ENCODE measurements at regions of chr19 and their contacts with region 1.

Region 1: GRCh38 chr19:2236314-2237050 is at the starts of genes PLEKHJ1 and SF3A2:
- H3K4me3 ChIP-seq: peak within 1 kb of the TSS; percentile 84
- H3K27ac ChIP-seq: peak within 1 kb of the TSS; percentile 95
- H3K4me1 ChIP-seq: peaks cover 4% of the 10 kb centered on the region; the same call in 1 of the 2 replicates
- CTCF ChIP-seq: peak; percentile 100

Region 2: GRCh38 chr19:2113439-2114211 is 122.9 kb before region 1 on chr19:
- CTCF ChIA-PET with region 1: no interaction called
- POLR2A ChIA-PET with region 1: no interaction called
- H3K4me3 ChIP-seq: no peak overlapping the region
- H3K27ac ChIP-seq: no peak overlapping the region
- H3K4me1 ChIP-seq: no peaks in the 10 kb centered on the region
- CTCF ChIP-seq: no peak

Region 3: DNA sequence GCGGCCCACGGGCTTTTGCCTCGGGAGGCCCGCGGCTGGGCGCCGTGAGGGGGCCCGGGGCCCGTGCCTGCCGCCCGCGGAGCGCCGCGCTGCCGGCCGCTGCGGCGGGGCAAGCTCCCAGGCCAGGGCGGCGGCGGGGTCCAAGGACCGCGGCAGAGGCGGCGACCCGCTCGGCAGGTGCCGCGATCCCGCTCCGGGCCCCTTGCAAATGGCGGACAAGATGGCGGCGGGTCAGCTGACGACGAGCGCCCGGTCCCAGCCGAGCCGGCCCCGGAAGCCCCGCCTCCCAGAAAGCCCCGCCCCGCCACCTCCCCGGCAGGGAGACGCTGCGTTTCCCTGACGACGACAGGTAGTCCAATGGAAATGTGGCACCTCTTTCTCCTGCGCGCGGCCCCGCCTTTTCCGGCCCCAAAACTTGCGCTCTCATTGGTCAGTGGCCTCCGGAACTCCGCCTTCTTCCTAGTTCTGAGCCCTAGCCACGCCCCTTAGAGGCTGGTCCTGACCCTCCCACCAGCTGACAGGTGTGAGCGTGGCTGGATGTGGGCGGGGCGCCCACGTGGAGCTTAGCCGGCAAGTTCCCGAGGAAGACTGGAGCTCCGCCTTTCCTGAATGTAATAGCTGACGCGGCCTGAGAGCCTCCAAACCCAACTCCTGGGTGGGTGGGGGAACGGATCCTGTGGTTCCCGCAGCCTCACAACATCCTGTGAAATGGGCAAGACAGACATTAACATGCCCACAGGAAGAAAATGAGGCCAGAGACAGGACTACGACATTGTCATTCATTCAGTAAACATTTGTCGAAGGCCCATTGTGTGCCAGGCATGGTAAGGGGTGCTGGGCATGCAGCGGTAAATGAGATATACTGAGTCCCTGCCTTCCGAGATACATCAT is 84.9 kb before region 1 on chr19 and contains the start of gene AP3D1:
- CTCF ChIA-PET with region 1: interaction called, 12 read pairs
- POLR2A ChIA-PET with region 1: interaction called, 7 read pairs
- H3K4me3 ChIP-seq: peak within 1 kb of the TSS; percentile 79
- H3K27ac ChIP-seq: peak within 1 kb of the TSS; percentile 91
- H3K4me1 ChIP-seq: peaks cover 6% of the 10 kb centered on the region
- CTCF ChIP-seq: no peak

Region 4: GRCh38 chr19:2249880-2250764 is 13.6 kb after region 1 on chr19:
- CTCF ChIA-PET with region 1: interaction called, 3 read pairs
- POLR2A ChIA-PET with region 1: interaction called, 14 read pairs
- H3K4me3 ChIP-seq: no peak overlapping the region
- H3K27ac ChIP-seq: no peak overlapping the region
- H3K4me1 ChIP-seq: no peaks in the 10 kb centered on the region
- CTCF ChIP-seq: no peak

Region 5: DNA sequence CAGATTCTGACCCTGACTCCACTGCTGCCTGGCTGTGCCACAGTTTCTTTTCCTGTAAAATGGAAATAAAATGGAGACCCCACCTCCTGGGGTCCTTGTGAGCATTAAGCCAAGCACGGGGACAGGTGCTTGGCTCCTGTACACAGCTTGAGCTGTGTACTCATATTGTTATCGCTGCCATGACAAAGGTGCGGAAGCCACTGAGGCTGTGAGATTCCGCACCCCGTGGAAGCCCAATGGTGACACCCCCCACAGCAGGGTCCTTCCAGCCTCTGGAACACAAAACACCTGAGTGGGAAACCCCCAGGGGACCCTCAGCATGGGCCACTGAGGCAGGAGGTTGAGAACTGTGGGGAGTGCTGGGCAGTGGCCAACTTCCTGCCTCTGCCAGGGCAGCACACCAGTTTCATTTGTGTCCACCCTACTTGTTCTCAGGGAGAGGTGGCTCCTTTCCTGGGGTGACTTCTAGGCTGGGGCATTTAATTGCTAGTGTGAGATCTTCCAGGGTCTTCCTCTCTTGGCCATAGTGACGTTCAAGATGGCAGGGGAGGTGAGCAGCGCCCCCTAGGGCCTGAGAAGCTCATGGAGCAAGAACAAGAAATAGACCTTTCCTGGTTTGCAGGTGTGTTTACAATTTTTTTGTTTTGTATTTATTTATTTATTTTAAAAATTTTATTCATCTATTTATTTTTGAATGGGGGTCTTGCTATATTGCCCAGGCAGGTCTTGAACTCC is 25.1 kb after region 1 on chr19:
- CTCF ChIA-PET with region 1: interaction called, 29 read pairs
- POLR2A ChIA-PET with region 1: interaction called, 8 read pairs
- H3K4me3 ChIP-seq: no peak overlapping the region
- H3K27ac ChIP-seq: no peak overlapping the region
- H3K4me1 ChIP-seq: no peaks in the 10 kb centered on the region
- CTCF ChIP-seq: no peak

Region 6: GRCh38 chr19:2355168-2356035 is 118.9 kb after region 1 on chr19:
- CTCF ChIA-PET with region 1: no interaction called
- POLR2A ChIA-PET with region 1: no interaction called
- H3K4me3 ChIP-seq: no peak overlapping the region
- H3K27ac ChIP-seq: no peak overlapping the region
- H3K4me1 ChIP-seq: no peaks in the 10 kb centered on the region
- CTCF ChIP-seq: no peak